CD4-positive, alpha-beta memory T cell (primary cell): ENCODE measurements at regions of chr12 and their contacts with region 1.

Region 1: GRCh38 chr12:12837025-12837872 is 24.1 kb downstream of the DDX47 start:
- DNase-seq: peak; percentile 38 to 49 (median 47)
- H3K4me3 ChIP-seq: no peak overlapping the region
- H3K4me3 Mint-ChIP-seq: peak overlapping the region in 5 of 8 donors; percentile 1 to 76 (median 24)
- H3K27ac ChIP-seq: no peak overlapping the region
- H3K27ac Mint-ChIP-seq: peak overlapping the region; percentile 1 to 87 (median 52)
- H3K4me1 ChIP-seq: peaks cover 18% of the 10 kb centered on the region
- H3K4me1 Mint-ChIP-seq: peaks cover 7 to 24% (median 16%) of the 10 kb centered on the region in 4 donors
- H3K27me3 ChIP-seq: no peaks in the 10 kb centered on the region
- H3K27me3 Mint-ChIP-seq: no peaks in the 10 kb centered on the region

Region 2: DNA sequence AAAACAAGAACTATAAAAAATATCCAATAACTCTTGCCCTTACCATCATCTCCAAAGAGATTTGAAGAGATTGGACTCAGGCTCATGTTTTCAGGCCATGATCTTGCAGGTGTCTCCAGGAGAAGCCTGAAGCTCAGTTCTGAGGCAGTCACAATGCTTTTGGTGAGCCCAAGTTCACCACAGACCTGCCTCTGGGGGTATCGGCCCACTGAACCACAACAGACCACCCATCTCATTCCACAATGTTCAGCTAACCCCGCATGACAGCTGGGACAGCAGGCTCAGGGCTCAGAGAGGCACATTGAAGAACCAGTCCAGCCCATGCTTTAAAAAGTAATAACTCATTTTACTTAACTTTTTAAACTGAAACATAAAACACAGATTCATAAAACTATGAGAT is 80.1 kb before region 1 on chr12:
- CTCF ChIA-PET with region 1: no interaction called
- POLR2A ChIA-PET with region 1: no interaction called
- intact Hi-C with region 1: no loop called
- DNase-seq: no peak
- H3K4me3 ChIP-seq: no peak overlapping the region
- H3K4me3 Mint-ChIP-seq: no peak overlapping the region
- H3K27ac ChIP-seq: no peak overlapping the region
- H3K27ac Mint-ChIP-seq: peak overlapping the region in 1 of 7 donors; percentile 53
- H3K4me1 ChIP-seq: no peaks in the 10 kb centered on the region
- H3K4me1 Mint-ChIP-seq: no peaks in the 10 kb centered on the region
- H3K27me3 ChIP-seq: no peaks in the 10 kb centered on the region
- H3K27me3 Mint-ChIP-seq: no peaks in the 10 kb centered on the region

Region 3: GRCh38 chr12:12890815-12891645 is 53.8 kb after region 1 on chr12 and contains the start of gene GPRC5A:
- CTCF ChIA-PET with region 1: interaction called, 12 read pairs
- POLR2A ChIA-PET with region 1: no interaction called
- intact Hi-C with region 1: loop called (anchors 2 kb)
- DNase-seq: peak; percentile 16 to 33 (median 19)
- H3K4me3 ChIP-seq: peak within 1 kb of the TSS; percentile 36 to 56
- H3K4me3 Mint-ChIP-seq: peak within 1 kb of the TSS; percentile 85 to 91 (median 88)
- H3K27ac ChIP-seq: no peak within 1 kb of the TSS
- H3K27ac Mint-ChIP-seq: peak within 1 kb of the TSS in 4 of 7 donors; percentile 4 to 74 (median 54)
- H3K4me1 ChIP-seq: peaks cover 11% of the 10 kb centered on the region
- H3K4me1 Mint-ChIP-seq: peaks cover 3 to 13% (median 5%) of the 10 kb centered on the region in 4 donors
- H3K27me3 ChIP-seq: peaks cover 6% of the 10 kb centered on the region
- H3K27me3 Mint-ChIP-seq: peaks cover 18 to 34% of the 10 kb centered on the region in 2 donors
- total RNA-seq, gene GPRC5A: not detected

Region 4: DNA sequence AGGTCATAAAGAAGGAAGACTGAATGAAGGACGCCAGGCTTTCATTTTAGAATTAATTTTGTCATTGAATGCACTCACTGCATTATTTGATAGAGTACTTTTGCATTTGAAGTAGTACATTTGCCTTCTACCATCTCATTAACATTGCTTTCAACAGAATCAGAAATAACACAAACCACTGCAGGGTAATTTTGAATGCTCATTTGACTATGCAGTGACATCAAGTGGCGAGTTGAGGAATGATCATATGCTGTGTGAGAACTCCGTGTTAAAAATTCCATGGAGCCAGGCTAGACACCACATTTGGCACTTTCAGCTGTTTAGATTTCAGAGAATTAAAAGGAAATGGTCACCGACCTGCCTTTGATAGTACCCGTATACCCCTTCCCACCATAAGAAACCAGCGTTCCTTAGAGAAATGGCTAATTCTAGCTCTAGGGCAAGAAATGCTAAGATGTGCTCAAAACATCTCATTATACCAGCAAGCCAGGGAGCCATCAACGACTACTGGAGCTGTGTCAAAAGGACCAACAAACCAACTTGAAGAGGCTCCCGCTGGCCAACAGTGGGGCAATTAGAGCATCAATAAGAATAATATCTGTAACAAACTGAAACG is 146.3 kb after region 1 on chr12:
- CTCF ChIA-PET with region 1: interaction called, 3 read pairs
- POLR2A ChIA-PET with region 1: no interaction called
- intact Hi-C with region 1: loop called (anchors 5 kb)
- DNase-seq: no peak
- H3K4me3 ChIP-seq: no peak overlapping the region
- H3K4me3 Mint-ChIP-seq: no peak overlapping the region
- H3K27ac ChIP-seq: no peak overlapping the region
- H3K27ac Mint-ChIP-seq: peak overlapping the region in 1 of 7 donors; percentile 52
- H3K4me1 ChIP-seq: no peaks in the 10 kb centered on the region
- H3K4me1 Mint-ChIP-seq: peaks cover 0 to 2% (median under 1%) of the 10 kb centered on the region in 4 donors
- H3K27me3 ChIP-seq: no peaks in the 10 kb centered on the region
- H3K27me3 Mint-ChIP-seq: no peaks in the 10 kb centered on the region